ENCODE measurements at regions of chr9 and their contacts with region 1.

Region 1: DNA sequence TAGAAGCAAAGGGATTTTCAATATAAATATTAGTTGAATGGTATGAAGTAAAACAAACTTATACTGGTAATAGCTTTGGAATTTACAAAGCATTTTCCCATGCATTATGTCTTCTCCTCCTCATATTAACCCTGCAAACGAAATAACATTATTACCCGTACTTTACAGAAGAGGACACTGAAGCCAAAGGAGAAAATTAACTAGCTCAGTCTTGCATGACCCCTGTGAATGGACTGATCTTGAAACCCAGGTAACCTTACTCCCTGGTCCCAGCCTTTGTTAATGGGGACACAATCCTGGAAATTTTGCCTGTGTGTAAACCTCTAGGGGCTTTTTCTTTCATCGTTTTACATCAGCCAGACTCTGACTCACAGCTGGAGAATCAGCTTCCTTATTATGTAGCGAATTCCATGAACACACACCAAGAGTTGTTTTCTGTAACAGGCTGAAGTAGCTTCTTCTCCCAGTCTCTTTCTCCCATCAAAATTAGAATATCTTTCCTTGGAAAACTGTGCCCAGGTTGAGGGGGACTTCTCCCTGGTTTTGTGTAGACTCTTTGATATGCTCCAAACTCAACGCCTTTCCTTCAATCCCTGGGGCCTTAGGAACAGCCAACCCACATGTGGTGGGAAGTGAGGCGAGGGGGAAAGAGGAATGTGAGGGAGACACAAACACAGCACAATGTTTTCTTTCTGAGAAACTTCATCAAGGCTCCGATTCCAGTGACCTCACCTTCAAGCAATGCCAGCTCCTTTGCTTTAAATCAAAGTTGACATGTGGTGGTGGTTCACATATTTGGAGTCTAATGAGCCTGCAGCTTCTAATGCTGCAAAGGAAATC is 480.9 kb upstream of the PAPPA start:
- DNase-seq: peak; percentile 95
- H3K4me3 ChIP-seq: no peak overlapping the region
- CTCF ChIP-seq: no peak

Region 2: DNA sequence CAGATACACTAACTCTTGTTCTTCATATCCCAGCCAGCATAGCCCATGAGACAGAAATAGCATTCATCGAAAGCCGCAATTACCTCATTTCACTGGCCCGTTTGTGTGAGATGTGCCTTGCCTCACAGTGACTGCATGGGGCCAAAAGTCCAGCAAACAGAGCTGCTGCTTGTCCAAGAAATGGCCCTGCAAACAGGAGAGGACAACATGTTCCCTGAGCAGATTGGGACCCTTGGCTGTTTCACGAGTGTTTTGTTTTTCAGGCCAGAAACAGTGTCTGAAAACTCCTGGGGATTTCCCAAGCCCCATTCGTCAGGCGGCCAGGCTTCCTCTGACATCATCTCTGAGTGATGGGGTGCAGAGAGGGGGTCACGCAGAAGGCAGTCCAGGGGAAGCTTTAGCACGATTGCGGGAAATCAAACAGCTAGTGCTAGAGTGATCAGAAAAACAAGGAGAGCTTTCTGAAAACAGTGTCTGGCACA is 22.7 kb before region 1 on chr9:
- CTCF ChIA-PET with region 1: interaction called, 3 read pairs
- POLR2A ChIA-PET with region 1: interaction called, 28 read pairs
- DNase-seq: peak; percentile 58
- H3K4me3 ChIP-seq: no peak overlapping the region
- CTCF ChIP-seq: no peak

Measured in AG04449 (cell line).